ENCODE measurements at regions of chr16 and their contacts with region 1.

Region 1: DNA sequence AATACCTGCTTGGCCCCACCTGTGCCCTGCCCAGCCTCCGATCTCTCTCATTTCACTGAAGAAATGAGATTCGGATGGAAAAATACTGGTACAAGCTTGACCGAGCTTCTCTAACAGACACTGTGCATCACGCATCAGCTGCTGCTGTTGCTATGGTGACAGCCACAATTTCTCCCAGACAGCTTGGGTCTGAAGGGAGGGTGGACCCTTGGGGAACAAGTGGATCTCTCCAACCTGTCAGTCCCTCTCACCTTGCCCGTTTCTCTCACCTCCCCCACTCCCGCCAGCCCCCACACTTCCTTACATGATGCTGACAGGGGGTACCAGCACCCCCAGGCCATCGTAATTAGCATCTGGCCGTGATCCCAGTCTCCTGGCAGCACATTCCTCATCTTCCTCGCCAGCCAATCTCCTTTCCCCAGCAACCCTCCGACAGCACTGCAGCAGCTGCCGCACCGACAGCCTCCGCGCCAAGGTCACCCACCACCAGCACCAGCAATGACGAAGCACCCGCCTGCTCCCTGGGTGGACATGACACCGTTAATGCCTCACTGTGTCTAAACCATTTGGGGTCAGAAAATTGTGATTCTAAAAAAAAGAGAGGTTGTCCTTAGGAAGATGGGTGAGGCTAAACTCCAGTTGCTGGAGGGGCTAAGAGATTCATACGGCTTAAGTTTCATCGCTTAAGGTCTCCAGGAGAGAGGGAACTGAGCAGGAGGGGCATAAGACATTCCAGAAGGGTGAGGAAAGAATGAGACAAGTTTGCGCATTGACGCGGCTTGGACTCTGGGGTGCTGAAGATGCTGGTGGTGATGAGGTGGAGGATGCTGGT is 58.6 kb upstream of the TNRC6A start:
- DNase-seq: peak; percentile 55
- H3K4me3 ChIP-seq: no peak overlapping the region
- H3K27ac ChIP-seq: no peak overlapping the region
- H3K4me1 ChIP-seq: peaks cover 18% of the 10 kb centered on the region
- H3K27me3 ChIP-seq: no peaks in the 10 kb centered on the region
- CTCF ChIP-seq: no peak

Region 2: GRCh38 chr16:24609740-24610415 is 61.0 kb before region 1 on chr16:
- CTCF ChIA-PET with region 1: no interaction called
- dilution Hi-C with region 1: loop called (anchors 5 kb)
- in situ Hi-C with region 1: no loop called
- intact Hi-C with region 1: no loop called
- DNase-seq: peak; percentile 36
- H3K4me3 ChIP-seq: no peak overlapping the region
- H3K27ac ChIP-seq: no peak overlapping the region
- H3K4me1 ChIP-seq: peaks cover 5% of the 10 kb centered on the region
- H3K27me3 ChIP-seq: no peaks in the 10 kb centered on the region
- CTCF ChIP-seq: no peak

Region 3: GRCh38 chr16:24645739-24646645 is 24.8 kb before region 1 on chr16:
- CTCF ChIA-PET with region 1: no interaction called
- dilution Hi-C with region 1: no loop called
- in situ Hi-C with region 1: no loop called
- intact Hi-C with region 1: loop called (anchors 1 kb)
- DNase-seq: peak; percentile 98
- H3K4me3 ChIP-seq: no peak overlapping the region
- H3K27ac ChIP-seq: peak overlapping the region; percentile 91
- H3K4me1 ChIP-seq: peaks cover 17% of the 10 kb centered on the region
- H3K27me3 ChIP-seq: no peaks in the 10 kb centered on the region
- CTCF ChIP-seq: no peak

Region 4: GRCh38 chr16:24700549-24701392 is 29.9 kb after region 1 on chr16:
- CTCF ChIA-PET with region 1: no interaction called
- dilution Hi-C with region 1: no loop called
- in situ Hi-C with region 1: no loop called
- intact Hi-C with region 1: loop called (anchors 1 kb)
- DNase-seq: peak; percentile 85
- H3K4me3 ChIP-seq: no peak overlapping the region
- H3K27ac ChIP-seq: peak overlapping the region; percentile 14
- H3K4me1 ChIP-seq: peaks cover 16% of the 10 kb centered on the region
- H3K27me3 ChIP-seq: no peaks in the 10 kb centered on the region
- CTCF ChIP-seq: peak; percentile 22 to 50

Region 5: GRCh38 chr16:24771132-24771778 is 100.4 kb after region 1 on chr16:
- CTCF ChIA-PET with region 1: no interaction called
- dilution Hi-C with region 1: no loop called
- in situ Hi-C with region 1: no loop called
- intact Hi-C with region 1: no loop called
- DNase-seq: no peak
- H3K4me3 ChIP-seq: no peak overlapping the region
- H3K27ac ChIP-seq: no peak overlapping the region
- H3K4me1 ChIP-seq: peaks cover 2% of the 10 kb centered on the region
- H3K27me3 ChIP-seq: no peaks in the 10 kb centered on the region
- CTCF ChIP-seq: no peak

Measured in mammary epithelial cell (primary cell).